H1 (cell line): ENCODE measurements at regions of chrX and their contacts with region 1.

Region 1: DNA sequence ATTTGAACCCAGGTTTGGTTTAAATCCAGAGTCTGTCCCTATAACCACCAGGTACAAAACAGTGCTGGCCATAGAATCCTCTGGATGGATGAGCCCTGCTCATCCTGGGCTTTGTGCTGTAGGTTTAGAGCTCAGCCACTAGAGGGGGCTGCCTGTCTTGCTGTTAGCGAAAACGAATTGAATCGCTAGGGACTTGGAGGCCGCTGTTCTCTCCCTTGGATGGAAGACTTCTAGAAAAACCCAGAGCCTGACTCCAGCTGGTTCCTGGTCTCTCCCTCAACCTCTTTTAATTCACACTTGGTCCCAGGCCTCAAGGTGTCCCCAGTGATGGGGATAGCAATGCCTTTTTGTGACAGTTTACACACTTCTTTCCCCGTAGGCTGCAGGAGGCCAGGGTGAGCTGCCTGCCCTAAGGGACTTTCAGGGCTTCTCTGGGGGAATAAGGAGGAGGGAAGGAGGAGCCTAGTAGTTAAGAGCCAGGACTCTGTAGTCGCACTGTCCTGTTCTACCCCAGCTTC is 8.7 kb downstream of the RIPPLY1 start:
- DNase-seq: peak; percentile 2 to 57
- H3K4me3 ChIP-seq: no peak overlapping the region
- H3K27ac ChIP-seq: no peak overlapping the region
- H3K4me1 ChIP-seq: no peaks in the 10 kb centered on the region; a peak in 1 of 7 replicates
- H3K27me3 ChIP-seq: no peaks in the 10 kb centered on the region
- CTCF ChIP-seq: peak; percentile 57 to 79 (median 74)
- EP300 ChIP-seq: no peak
- POLR2A ChIP-seq: no peak
- RAD21 ChIP-seq: peak; percentile 84 to 86

Region 2: GRCh38 chrX:106874075-106874474 is 20.4 kb before region 1 on chrX:
- CTCF ChIA-PET with region 1: interaction called, 19 read pairs
- POLR2A ChIA-PET with region 1: no interaction called
- DNase-seq: no peak
- H3K4me3 ChIP-seq: no peak overlapping the region
- H3K27ac ChIP-seq: no peak overlapping the region
- H3K4me1 ChIP-seq: no peaks in the 10 kb centered on the region
- H3K27me3 ChIP-seq: no peaks in the 10 kb centered on the region
- CTCF ChIP-seq: peak in 1 of 3 experiments; percentile 40; a peak in 2 of 4 replicates
- EP300 ChIP-seq: no peak
- POLR2A ChIP-seq: no peak
- RAD21 ChIP-seq: peak in 1 of 2 experiments; percentile 32; a peak in 2 of 4 replicates

Region 3: GRCh38 chrX:106906361-106906760 is 11.9 kb after region 1 on chrX:
- CTCF ChIA-PET with region 1: interaction called, 35 read pairs
- POLR2A ChIA-PET with region 1: no interaction called
- DNase-seq: no peak
- H3K4me3 ChIP-seq: no peak overlapping the region
- H3K27ac ChIP-seq: no peak overlapping the region
- H3K4me1 ChIP-seq: no peaks in the 10 kb centered on the region
- H3K27me3 ChIP-seq: no peaks in the 10 kb centered on the region
- CTCF ChIP-seq: no peak
- EP300 ChIP-seq: no peak
- POLR2A ChIP-seq: no peak
- RAD21 ChIP-seq: no peak

Region 4: GRCh38 chrX:106933041-106933961 is 38.9 kb after region 1 on chrX:
- CTCF ChIA-PET with region 1: interaction called, 10 read pairs
- POLR2A ChIA-PET with region 1: no interaction called
- DNase-seq: no peak
- H3K4me3 ChIP-seq: no peak overlapping the region
- H3K27ac ChIP-seq: no peak overlapping the region
- H3K4me1 ChIP-seq: no peaks in the 10 kb centered on the region
- H3K27me3 ChIP-seq: no peaks in the 10 kb centered on the region
- CTCF ChIP-seq: no peak
- EP300 ChIP-seq: no peak
- POLR2A ChIP-seq: no peak
- RAD21 ChIP-seq: no peak

Region 5: DNA sequence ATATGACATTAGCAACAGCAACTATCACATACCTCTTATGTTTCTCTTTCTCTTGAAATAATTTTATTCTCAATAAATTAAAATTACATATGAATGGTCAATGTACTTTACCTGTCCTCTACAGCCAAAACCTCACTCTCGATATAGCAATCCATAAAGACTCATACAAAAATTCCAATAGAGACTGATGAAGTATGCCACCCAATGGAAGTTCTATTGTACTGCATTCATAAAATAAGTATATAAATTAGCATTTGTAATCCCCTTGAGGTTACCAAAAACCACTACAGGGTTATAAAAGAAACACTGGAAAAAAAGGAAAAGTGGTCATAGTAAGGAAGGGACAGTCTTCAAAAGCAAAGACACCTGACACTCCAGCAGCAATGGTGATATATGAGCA is 58.5 kb after region 1 on chrX:
- CTCF ChIA-PET with region 1: interaction called, 50 read pairs
- POLR2A ChIA-PET with region 1: no interaction called
- DNase-seq: no peak
- H3K4me3 ChIP-seq: no peak overlapping the region
- H3K27ac ChIP-seq: no peak overlapping the region
- H3K4me1 ChIP-seq: no peaks in the 10 kb centered on the region
- H3K27me3 ChIP-seq: no peaks in the 10 kb centered on the region
- CTCF ChIP-seq: no peak
- EP300 ChIP-seq: no peak
- POLR2A ChIP-seq: no peak
- RAD21 ChIP-seq: no peak

Region 6: GRCh38 chrX:106959901-106960300 is 65.5 kb after region 1 on chrX:
- CTCF ChIA-PET with region 1: interaction called, 50 read pairs
- POLR2A ChIA-PET with region 1: no interaction called
- DNase-seq: no peak
- H3K4me3 ChIP-seq: no peak overlapping the region
- H3K27ac ChIP-seq: no peak overlapping the region
- H3K4me1 ChIP-seq: no peaks in the 10 kb centered on the region
- H3K27me3 ChIP-seq: no peaks in the 10 kb centered on the region
- CTCF ChIP-seq: peak in 2 of 3 experiments; percentile 25 to 43; a peak in 3 of 4 replicates
- EP300 ChIP-seq: no peak
- POLR2A ChIP-seq: no peak
- RAD21 ChIP-seq: peak; percentile 27 to 47